Posterior vena cava (tissue), 2 donors: ENCODE measurements at regions of chr2 and their contacts with region 1.

Region 1: DNA sequence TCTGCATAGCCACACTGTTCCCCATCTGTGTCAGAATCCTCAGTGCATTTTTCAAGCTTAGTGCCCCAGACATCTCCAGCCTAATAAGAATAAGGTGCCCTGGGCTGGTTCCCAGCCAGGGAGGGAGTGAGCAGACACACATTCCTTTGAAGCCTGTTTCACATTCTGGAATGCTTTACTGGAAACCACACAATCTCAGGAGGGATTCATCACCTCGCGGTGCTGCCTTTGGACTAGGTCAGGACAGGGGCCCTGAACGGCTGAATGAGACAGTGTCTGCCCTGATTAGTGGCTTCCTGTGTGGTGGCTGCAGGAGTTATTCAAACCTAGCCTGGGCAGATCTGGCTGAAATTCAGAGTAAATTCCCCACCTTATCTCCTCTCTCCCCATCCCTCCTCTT is 108.0 kb upstream of the LDAH start:
- DNase-seq: no peak

Region 2: DNA sequence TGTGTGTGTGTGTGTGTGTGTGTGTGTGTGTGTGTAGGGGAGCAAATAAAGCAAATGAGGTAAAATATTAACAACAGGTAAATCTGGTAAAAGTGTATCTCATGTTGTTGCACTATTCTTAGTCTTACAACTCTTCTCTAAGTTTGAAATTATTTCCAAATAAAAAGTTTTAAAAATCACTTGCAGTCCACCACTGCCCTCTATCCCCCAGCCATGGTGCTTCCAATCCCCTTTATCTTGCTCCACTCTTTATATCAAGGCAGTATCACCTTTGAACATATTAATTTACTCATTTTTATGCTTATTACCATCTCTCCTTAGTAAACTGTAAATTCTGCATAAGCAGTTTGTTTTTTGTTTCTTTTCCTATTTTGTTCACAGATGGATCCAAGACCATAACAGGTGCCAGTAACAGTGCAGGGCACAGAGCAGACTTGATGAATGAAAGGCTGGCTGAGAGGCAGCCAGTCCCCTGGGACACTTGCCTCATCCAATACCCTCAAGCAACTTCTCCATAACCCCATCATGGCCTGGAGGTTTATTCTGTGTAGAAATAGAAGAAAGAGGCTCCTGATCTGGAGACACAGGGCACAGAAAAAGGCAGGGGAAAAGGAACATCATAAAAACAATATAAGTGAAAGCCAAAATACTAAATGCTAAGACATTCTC is 175.7 kb before region 1 on chr2:
- intact Hi-C with region 1: no loop called
- DNase-seq: no peak

Region 3: DNA sequence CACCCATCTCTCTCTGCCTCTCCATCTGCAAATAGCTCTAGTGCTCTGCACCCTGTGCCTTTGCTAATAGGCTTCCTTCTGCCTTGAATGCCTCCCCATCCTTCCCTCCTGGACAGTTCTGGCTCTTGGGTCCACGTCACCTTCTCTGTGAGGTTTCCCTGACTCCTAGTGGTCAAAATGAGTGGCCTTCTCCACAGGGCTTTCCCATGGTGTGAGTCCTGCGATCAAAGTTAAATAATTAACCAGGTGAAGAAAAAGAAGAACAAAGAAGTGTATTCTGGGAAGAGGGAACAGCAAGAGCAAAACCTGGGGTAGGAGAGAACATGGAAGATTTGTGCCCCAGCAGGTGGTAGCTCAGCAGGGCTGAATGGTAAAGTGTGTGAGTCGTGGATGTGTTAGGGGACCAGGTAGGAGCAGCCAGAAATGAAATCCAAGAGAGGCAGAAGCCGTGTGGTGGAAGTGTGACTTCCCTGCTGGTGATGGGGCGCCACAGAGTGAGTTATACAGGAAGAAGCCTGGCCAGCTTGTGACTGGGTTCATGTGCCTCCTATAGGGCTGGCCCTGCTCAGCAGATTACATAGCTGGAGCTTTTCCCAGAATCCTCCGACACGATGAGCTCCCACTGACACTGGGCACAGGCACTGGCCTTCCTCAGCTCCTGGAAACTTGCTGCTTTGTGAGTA is 14.2 kb before region 1 on chr2:
- intact Hi-C with region 1: loop called in 1 of 2 experiments (anchors 1 kb)
- DNase-seq: no peak

Region 4: GRCh38 chr2:20962939-20963557 is 32.1 kb after region 1 on chr2:
- intact Hi-C with region 1: no loop called
- DNase-seq: peak; percentile 87

Region 5: GRCh38 chr2:21010813-21011439 is 80.0 kb after region 1 on chr2:
- intact Hi-C with region 1: no loop called
- DNase-seq: no peak